ENCODE measurements at regions of chr9 and their contacts with region 1.

Region 1: GRCh38 chr9:128339771-128340690 is at the start of gene SLC27A4:
- DNase-seq: peak; percentile 78
- H3K4me3 Mint-ChIP-seq: peak within 1 kb of the TSS; percentile 93
- H3K27ac Mint-ChIP-seq: peak within 1 kb of the TSS; percentile 69
- H3K4me1 Mint-ChIP-seq: peaks cover 5% of the 10 kb centered on the region
- H3K27me3 Mint-ChIP-seq: no peaks in the 10 kb centered on the region
- total RNA-seq, gene SLC27A4: 5.7 to 6.8 TPM

Region 2: DNA sequence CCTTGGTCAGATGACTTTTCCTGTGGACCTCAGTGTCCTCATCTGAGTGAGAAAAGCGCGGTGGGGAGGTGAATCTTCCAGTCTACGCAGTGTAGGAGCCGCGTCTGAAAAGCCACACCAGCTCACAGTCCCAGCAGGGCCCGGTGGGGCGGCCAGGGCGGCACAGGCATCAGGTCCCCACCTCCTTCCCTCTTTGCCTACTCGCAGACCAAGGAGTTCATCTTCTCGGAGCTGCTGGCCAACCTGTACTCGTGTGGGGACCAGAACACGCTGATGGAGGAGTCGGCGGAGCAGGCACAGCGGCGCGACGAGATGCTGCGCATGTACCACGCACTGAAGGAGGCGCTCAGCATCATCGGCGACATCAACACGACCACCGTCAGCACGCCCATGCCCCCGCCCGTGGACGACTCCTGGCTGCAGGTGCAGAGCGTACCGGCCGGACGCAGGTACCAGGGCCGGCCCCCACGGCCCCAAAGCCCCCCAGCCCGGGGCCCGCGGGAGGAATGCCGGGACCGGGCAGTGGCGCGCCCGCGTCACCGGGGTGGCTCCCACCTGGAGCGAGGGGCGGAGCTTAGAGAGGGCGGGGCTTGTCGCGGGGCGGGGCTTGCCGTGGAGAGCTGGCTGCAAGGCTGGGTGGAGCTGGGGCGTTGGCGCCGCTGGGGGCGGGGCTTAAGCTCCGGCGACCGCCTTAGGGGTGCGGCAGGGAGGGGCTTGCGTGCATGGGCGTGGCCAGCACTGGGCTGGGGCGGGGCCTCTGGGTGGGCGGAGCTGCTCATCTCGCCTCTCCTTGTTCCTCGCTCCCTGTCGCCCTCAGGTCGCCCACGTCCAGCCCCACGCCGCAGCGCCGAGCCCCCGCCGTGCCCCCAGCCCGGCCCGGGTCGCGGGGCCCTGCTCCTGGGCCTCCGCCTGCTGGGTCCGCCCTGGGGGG is 89.9 kb before region 1 on chr9:
- CTCF ChIA-PET with region 1: interaction called, 3 read pairs
- intact Hi-C with region 1: loop called (anchors 1 kb)
- DNase-seq: peak; percentile 98
- H3K4me3 Mint-ChIP-seq: peak overlapping the region; percentile 77
- H3K27ac Mint-ChIP-seq: no peak overlapping the region
- H3K4me1 Mint-ChIP-seq: peaks cover 14% of the 10 kb centered on the region
- H3K27me3 Mint-ChIP-seq: peaks cover 10% of the 10 kb centered on the region

Region 3: GRCh38 chr9:128322404-128323211 is 17.4 kb before region 1 on chr9 and contains the starts of genes COQ4 and TRUB2:
- CTCF ChIA-PET with region 1: interaction called, 5 read pairs
- intact Hi-C with region 1: loop called (anchors 1 kb)
- DNase-seq: peak; percentile 95
- H3K4me3 Mint-ChIP-seq: peak within 1 kb of the TSS; percentile 90
- H3K27ac Mint-ChIP-seq: peak within 1 kb of the TSS; percentile 94
- H3K4me1 Mint-ChIP-seq: peaks cover 22% of the 10 kb centered on the region
- H3K27me3 Mint-ChIP-seq: no peaks in the 10 kb centered on the region
- total RNA-seq, gene COQ4: 27.8 to 29.6 TPM
- total RNA-seq, gene TRUB2: 28.0 to 29.4 TPM

Region 4: DNA sequence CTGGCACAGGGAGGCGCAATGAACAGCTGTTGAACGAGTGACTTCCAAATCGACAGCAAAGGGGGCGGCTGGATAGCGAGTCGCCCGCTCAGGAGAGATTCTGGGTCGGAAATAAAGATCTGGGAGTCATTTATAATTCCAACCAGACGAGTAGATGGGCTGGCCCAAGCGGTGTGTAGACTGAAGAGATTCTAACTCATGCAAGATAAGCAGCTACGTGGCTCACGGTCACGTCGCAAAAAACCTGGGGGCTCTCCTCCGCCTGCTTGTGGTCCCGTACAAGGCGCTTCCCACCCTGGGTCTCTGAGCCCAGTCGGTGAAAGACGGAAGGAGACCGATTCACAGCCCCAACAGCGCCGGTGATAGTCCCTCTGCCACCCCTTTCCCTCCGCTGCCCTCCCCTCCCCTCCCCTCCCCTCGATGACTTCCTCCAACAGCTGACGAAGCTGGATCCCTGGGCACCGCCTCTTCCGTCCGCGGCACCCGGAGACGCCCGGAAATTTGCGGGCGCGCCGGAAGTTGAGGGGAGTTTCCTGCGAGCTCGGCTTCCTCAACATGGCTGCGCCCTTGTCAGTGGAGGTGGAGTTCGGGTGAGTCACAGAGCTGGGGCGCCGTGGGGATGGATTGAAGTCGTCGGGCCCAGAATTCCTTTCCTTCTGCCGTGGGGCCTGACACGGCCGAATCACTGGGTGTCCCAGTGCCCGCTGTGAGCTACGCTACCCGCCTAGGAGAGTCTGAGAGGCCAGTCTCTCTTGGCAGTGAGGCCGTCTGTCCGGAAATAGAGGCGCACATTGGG is 31.0 kb after region 1 on chr9 and contains the start of gene URM1:
- CTCF ChIA-PET with region 1: interaction called, 3 read pairs
- intact Hi-C with region 1: loop called (anchors 1 kb)
- DNase-seq: peak; percentile 97
- H3K4me3 Mint-ChIP-seq: peak within 1 kb of the TSS; percentile 92
- H3K27ac Mint-ChIP-seq: peak within 1 kb of the TSS; percentile 92
- H3K4me1 Mint-ChIP-seq: peaks cover 28% of the 10 kb centered on the region
- H3K27me3 Mint-ChIP-seq: no peaks in the 10 kb centered on the region
- total RNA-seq, gene URM1: 44.4 to 45.2 TPM